Activated CD4-positive, alpha-beta T cell treated with anti-CD3 and anti-CD28 coated beads for 36 hours (primary cell): ENCODE measurements at regions of chr7 and their contacts with region 1.

Region 1: GRCh38 chr7:93117852-93118530 is at the start of gene SAMD9:
- DNase-seq: peak; percentile 65
- ATAC-seq: peak; percentile 89
- H3K4me3 Mint-ChIP-seq: peak within 1 kb of the TSS; percentile 78
- H3K27ac Mint-ChIP-seq: peak within 1 kb of the TSS; percentile 88
- H3K4me1 Mint-ChIP-seq: peaks cover 49% of the 10 kb centered on the region
- H3K27me3 Mint-ChIP-seq: no peaks in the 10 kb centered on the region
- total RNA-seq, gene SAMD9: 10.2 to 10.7 TPM

Region 2: DNA sequence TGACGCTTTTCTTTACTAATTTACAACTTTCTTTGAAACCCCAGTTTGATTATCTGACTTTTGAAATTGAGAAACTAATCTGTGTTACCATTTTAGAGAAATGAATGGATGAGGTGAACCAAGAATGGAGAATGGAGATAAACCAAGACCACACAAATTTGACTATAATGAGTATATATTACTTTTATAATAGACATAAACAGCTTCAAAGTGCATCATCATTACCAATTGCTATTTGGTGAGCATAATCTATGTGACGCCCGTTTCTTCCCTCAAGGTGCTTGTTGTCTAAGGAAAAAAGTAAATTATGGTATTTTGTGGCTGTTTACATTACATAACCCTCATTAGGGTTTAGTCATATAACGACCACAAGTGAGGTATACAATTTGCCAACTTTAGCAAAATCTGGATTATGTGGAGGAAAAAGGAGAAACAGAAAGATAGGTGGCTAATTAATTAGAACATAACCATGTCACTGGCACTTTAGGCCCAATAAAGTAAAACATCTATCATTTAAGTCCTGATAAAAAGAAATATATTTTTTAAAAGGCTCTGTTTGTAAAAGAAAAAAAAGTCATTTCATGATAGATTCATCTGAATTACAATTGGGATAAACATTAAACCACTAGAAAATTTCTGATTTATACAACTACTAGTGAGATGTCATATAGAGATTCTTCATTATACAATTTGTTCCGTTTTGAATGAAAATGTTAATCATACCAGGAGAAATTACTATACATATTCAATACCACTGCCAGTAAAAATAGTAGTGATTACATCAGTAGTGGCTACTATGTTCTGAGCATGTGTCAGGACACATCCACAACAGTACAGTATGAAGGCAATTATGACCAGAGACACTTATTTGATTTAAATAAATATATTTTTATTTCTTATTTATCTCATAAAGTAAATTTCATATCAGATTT is 409.6 kb before region 1 on chr7:
- CTCF ChIA-PET with region 1: no interaction called
- POLR2A ChIA-PET with region 1: no interaction called
- intact Hi-C with region 1: loop called in 1 of 2 experiments (anchors 5 kb)
- DNase-seq: no peak
- ATAC-seq: peak; percentile 84
- H3K4me3 Mint-ChIP-seq: no peak overlapping the region
- H3K27ac Mint-ChIP-seq: peak overlapping the region; percentile 86
- H3K4me1 Mint-ChIP-seq: peaks cover 52% of the 10 kb centered on the region
- H3K27me3 Mint-ChIP-seq: no peaks in the 10 kb centered on the region

Region 3: DNA sequence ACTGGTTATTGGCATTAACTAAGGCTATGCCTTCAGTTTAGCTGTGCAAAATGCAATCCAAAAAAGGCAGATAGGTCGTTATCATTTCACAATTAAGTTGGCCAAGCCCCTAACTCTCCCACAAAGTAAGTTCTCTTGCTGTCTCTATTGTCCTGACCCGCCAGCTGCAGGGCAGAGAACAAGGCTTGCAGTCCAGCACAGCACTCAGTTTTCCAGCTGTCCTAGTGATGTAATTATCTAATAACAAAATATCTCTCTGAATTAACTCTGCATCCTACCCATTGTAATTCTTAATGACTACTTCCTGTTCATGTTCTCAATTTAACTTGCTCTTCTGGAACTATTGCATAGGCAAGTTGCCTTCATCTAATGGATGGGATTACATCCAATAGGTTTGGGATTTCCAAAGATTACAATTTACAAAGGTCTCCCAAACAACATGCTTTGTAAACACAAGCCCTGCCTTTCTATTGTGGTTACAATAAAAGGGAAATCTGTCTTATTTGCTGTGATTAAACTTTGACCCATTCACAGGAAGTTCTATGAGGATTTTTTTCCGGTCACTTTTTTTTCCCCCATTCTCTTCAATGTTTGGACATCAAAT is 336.8 kb before region 1 on chr7:
- CTCF ChIA-PET with region 1: no interaction called
- POLR2A ChIA-PET with region 1: no interaction called
- intact Hi-C with region 1: no loop called
- DNase-seq: no peak
- ATAC-seq: no peak
- H3K4me3 Mint-ChIP-seq: no peak overlapping the region
- H3K27ac Mint-ChIP-seq: peak overlapping the region; percentile 12
- H3K4me1 Mint-ChIP-seq: peaks cover 56% of the 10 kb centered on the region
- H3K27me3 Mint-ChIP-seq: no peaks in the 10 kb centered on the region

Region 4: DNA sequence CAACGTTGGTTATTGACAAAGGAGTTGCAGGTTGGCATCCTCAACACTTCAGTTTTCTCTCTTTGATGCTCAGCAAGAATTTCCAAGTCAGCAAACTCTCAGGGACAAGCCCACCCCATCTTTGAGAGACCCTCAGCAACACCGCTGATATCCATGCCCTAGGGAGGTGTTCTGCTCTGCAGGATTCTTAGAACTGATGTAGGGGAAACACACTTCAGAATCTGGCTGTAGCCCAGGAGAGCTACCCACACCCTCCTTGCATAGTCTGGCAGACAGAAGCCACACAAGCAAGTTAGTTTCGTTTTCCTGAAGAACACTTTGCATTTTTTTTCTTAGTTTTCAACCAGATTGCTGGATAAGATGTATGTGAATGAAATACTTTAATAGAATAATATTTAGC is 29.4 kb after region 1 on chr7:
- CTCF ChIA-PET with region 1: interaction called, 3 read pairs
- POLR2A ChIA-PET with region 1: no interaction called
- intact Hi-C with region 1: loop called (anchors 1 kb)
- DNase-seq: peak; percentile 62
- ATAC-seq: peak; percentile 86
- H3K4me3 Mint-ChIP-seq: peak overlapping the region; percentile 76
- H3K27ac Mint-ChIP-seq: peak overlapping the region; percentile 88
- H3K4me1 Mint-ChIP-seq: peaks cover 26% of the 10 kb centered on the region
- H3K27me3 Mint-ChIP-seq: no peaks in the 10 kb centered on the region

Region 5: GRCh38 chr7:93185303-93186027 is 67.5 kb after region 1 on chr7:
- CTCF ChIA-PET with region 1: no interaction called
- POLR2A ChIA-PET with region 1: no interaction called
- intact Hi-C with region 1: loop called (anchors 1 kb)
- DNase-seq: peak; percentile 39
- ATAC-seq: peak; percentile 98
- H3K4me3 Mint-ChIP-seq: no peak overlapping the region
- H3K27ac Mint-ChIP-seq: no peak overlapping the region
- H3K4me1 Mint-ChIP-seq: peaks cover 11% of the 10 kb centered on the region
- H3K27me3 Mint-ChIP-seq: peaks cover 44% of the 10 kb centered on the region

Region 6: GRCh38 chr7:93239824-93240223 is 121.8 kb after region 1 on chr7:
- CTCF ChIA-PET with region 1: no interaction called
- POLR2A ChIA-PET with region 1: no interaction called
- intact Hi-C with region 1: no loop called
- DNase-seq: no peak
- ATAC-seq: no peak
- H3K4me3 Mint-ChIP-seq: no peak overlapping the region
- H3K27ac Mint-ChIP-seq: no peak overlapping the region
- H3K4me1 Mint-ChIP-seq: no peaks in the 10 kb centered on the region
- H3K27me3 Mint-ChIP-seq: no peaks in the 10 kb centered on the region